HEK293 (cell line): ENCODE measurements at regions of chr14 and their contacts with region 1.

Region 1: GRCh38 chr14:73576391-73576790 is 7.4 kb downstream of the ACOT2 start:
- H3K4me3 ChIP-seq: no peak overlapping the region
- H3K27ac ChIP-seq: no peak overlapping the region
- H3K4me1 ChIP-seq: no peaks in the 10 kb centered on the region
- CTCF ChIP-seq: no peak

Region 2: GRCh38 chr14:72855913-72856312 is 720.5 kb before region 1 on chr14:
- CTCF ChIA-PET with region 1: no interaction called
- POLR2A ChIA-PET with region 1: no interaction called
- H3K4me3 ChIP-seq: no peak overlapping the region
- H3K27ac ChIP-seq: no peak overlapping the region
- H3K4me1 ChIP-seq: no peaks in the 10 kb centered on the region
- CTCF ChIP-seq: no peak

Region 3: GRCh38 chr14:73136387-73137225 is 439.8 kb before region 1 on chr14 and contains the start of gene PSEN1:
- CTCF ChIA-PET with region 1: no interaction called
- POLR2A ChIA-PET with region 1: interaction called, 15 read pairs
- H3K4me3 ChIP-seq: peak within 1 kb of the TSS; percentile 79
- H3K27ac ChIP-seq: peak within 1 kb of the TSS; percentile 84
- H3K4me1 ChIP-seq: no peaks in the 10 kb centered on the region
- CTCF ChIP-seq: no peak

Region 4: GRCh38 chr14:73627151-73627558 is 50.8 kb after region 1 on chr14:
- CTCF ChIA-PET with region 1: no interaction called
- POLR2A ChIA-PET with region 1: no interaction called
- H3K4me3 ChIP-seq: no peak overlapping the region
- H3K27ac ChIP-seq: no peak overlapping the region
- H3K4me1 ChIP-seq: no peaks in the 10 kb centered on the region
- CTCF ChIP-seq: no peak

Region 5: DNA sequence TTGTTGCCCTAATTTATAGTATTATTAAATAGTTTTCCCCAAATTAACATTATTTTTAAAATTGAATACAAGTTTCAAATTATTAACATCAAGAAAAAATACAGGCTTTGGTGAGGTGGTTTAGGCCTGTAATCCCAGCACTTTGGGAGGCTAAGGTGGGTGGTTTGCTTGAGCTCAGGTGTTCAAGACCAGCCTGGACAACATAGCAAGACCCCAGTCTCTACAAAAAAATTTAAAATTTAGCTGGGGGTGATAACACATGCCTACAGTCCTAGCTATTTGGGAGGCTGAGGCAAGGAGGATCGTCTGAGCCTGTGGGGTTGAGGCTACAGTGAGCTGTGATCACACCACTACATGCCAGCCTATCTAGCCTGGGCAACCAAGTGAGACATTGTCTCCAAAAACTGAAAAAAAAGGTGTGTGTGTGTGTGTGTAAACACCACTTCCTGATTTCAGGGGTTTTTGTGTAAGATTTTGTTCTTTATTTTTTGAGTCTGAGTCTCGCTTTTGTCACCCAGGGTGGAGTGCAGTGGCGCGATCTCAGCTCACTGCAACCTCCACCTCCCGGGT is 64.5 kb after region 1 on chr14:
- CTCF ChIA-PET with region 1: no interaction called
- POLR2A ChIA-PET with region 1: no interaction called
- H3K4me3 ChIP-seq: no peak overlapping the region
- H3K27ac ChIP-seq: no peak overlapping the region
- H3K4me1 ChIP-seq: peaks cover 7% of the 10 kb centered on the region; the same call in 1 of the 2 replicates
- CTCF ChIP-seq: no peak

Region 6: DNA sequence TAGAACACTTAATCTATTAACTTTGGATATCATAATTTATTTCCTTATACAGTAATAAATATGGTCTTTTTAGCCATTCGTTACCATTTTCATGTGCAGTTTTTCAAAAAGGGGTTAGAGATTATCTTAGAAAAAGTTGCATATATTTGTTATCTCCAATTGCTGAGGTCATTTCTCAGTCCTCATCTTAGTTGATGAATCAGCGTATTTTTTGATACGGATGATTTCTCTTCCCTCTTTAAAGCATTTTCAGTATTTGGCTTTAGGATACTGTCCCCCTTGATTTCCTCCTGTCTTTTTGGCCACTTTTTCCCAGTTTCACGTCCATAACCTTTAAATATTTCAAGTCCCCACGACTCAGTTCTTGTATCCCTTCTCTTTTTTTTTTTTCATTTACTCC is 90.2 kb after region 1 on chr14:
- CTCF ChIA-PET with region 1: no interaction called
- POLR2A ChIA-PET with region 1: no interaction called
- H3K4me3 ChIP-seq: no peak overlapping the region
- H3K27ac ChIP-seq: no peak overlapping the region
- H3K4me1 ChIP-seq: no peaks in the 10 kb centered on the region
- CTCF ChIP-seq: no peak